GM12878 (cell line): ENCODE measurements at regions of chr19 and their contacts with region 1.

Region 1: DNA sequence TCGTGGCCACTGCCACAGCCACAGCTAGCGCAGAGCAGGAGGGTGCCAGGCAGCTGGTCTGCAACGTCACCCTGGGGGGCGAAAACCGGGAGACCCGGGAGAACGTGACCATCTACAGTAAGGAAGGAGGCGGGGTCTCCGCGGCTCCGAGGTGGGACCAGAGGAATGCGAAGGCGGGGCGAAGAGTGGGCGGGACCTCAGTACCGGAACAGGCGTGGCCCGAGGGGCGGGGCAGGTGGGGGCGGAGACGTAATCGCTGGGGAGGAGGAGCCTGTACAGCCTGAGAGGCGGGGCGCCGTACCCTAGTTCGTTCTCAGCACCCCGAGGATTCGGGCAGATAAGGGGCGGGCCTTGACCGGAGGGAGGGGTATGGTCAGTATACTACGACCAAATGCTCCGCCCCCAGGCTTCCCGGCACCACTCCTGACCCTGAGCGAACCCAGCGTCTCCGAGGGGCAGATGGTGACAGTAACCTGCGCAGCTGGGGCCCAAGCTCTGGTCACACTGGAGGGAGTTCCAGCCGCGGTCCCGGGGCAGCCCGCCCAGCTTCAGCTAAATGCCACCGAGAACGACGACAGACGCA is 2.5 kb downstream of the ICAM5 start:
- DNase-seq: no peak
- ATAC-seq: peak; percentile 65
- H3K4me3 ChIP-seq: peak overlapping the region; percentile 77
- H3K27ac ChIP-seq: no peak overlapping the region
- H3K4me1 ChIP-seq: peaks cover 53% of the 10 kb centered on the region
- H3K27me3 ChIP-seq: peaks cover 3 to 16% of the 10 kb centered on the region in 2 experiments
- CTCF ChIP-seq: no peak
- EP300 ChIP-seq: no peak
- POLR2A ChIP-seq: no peak
- RAD21 ChIP-seq: no peak

Region 2: DNA sequence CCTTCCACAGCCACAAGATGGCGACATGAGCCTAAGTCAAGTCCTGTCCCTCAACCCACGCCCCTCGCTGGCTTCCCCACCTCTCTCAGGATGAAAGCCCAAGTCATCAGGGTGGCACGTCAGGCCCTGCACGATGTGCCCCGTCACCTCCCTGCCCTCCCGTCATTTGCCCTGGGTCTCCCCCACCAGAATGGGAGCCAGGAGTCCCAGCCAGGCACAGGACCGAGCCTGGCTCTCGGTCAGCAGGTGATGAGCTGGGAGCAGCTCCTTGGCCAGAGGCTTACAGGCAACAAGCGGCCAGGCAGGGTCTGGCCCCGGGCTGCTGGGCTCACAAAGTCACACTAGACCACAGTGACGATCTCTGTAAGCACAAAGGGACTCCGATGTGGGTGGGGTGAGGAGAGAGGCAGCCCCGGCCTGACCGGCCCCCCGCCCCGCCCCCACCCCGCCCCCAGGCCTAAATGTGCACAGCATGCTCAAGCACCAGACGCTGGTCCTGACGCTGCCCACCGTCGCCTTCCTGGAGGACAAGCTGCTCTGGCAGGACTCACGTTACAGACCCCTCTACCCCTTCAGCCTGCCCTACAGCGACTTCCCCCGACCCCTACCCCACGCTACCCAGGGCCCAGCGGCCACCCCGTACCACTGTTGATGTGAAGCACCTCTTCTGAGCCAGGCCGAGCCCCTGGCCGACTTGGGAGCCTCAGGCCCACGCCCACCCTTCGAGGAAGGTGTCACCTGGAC is 33.0 kb before region 1 on chr19:
- CTCF ChIA-PET with region 1: interaction called, 25 read pairs
- POLR2A ChIA-PET with region 1: interaction called, 6 read pairs
- RAD21 ChIA-PET with region 1: interaction called, 20 read pairs
- SMC1A ChIA-PET with region 1: interaction called, 4 read pairs
- in situ Hi-C with region 1: no loop called
- intact Hi-C with region 1: no loop called
- DNase-seq: no peak
- ATAC-seq: peak; percentile 91
- H3K4me3 ChIP-seq: no peak overlapping the region
- H3K27ac ChIP-seq: 0 out of 2 replicates have a peak overlapping the region, but pooled peaks have one; percentile 27
- H3K4me1 ChIP-seq: peaks cover 11% of the 10 kb centered on the region
- H3K27me3 ChIP-seq: no peaks in the 10 kb centered on the region
- CTCF ChIP-seq: peak; percentile 71 to 75 (median 73)
- EP300 ChIP-seq: no peak
- POLR2A ChIP-seq: peak; percentile 72
- RAD21 ChIP-seq: peak; percentile 74

Region 3: GRCh38 chr19:10279737-10280442 is 12.4 kb before region 1 on chr19:
- CTCF ChIA-PET with region 1: interaction called, 11 read pairs
- POLR2A ChIA-PET with region 1: interaction called, 13 read pairs
- RAD21 ChIA-PET with region 1: interaction called, 7 read pairs
- SMC1A ChIA-PET with region 1: interaction called, 17 read pairs
- in situ Hi-C with region 1: no loop called
- intact Hi-C with region 1: no loop called
- DNase-seq: no peak
- ATAC-seq: peak; percentile 30
- H3K4me3 ChIP-seq: peak overlapping the region; percentile 47; the same call in 1 of the 2 replicates
- H3K27ac ChIP-seq: no peak overlapping the region
- H3K4me1 ChIP-seq: peaks cover 11% of the 10 kb centered on the region
- H3K27me3 ChIP-seq: no peaks in the 10 kb centered on the region
- CTCF ChIP-seq: no peak
- EP300 ChIP-seq: no peak
- POLR2A ChIP-seq: peak; percentile 32; the same call in 1 of the 2 replicates
- RAD21 ChIP-seq: no peak

Region 4: DNA sequence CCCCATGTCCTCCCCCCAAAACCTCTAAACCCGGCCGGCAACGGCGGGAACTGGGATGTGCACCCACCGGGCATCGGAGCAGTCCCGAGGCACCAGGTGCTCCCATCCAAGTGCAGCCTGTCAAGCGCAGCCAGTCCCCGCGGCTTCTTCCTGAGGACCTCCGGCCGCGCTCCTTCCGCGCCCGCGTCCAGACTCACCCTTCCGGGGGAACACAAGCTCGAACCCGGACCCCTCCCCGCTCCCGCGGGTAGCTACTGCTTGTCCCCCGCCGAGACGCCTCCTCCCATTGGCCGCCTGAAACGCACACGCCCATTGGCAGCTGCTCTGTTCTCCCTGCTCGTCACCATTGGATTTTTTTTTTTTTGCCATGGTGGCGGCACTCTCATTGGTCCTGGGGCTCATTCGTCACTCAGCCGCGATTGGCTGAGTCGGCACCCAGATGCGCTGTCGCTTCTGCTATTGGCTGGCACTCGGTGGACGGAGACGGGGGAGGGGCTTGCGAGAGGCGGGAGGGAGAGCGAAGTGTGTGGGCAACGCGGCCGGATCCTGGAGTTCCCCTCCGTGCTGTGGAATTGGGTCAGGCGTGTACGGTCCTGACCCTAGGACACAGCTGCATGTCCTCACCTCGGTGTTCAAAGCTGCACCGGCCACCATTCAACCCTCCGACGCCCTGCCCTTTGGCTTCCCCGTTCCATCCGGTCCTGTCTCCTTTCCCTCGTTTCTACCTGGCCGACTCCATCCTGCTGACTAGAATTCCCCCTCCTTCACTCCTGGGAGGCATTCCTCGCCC is 88.2 kb after region 1 on chr19 and contains the start of gene TYK2:
- CTCF ChIA-PET with region 1: interaction called, 5 read pairs
- POLR2A ChIA-PET with region 1: interaction called, 10 read pairs
- RAD21 ChIA-PET with region 1: interaction called, 10 read pairs
- SMC1A ChIA-PET with region 1: interaction called, 5 read pairs
- in situ Hi-C with region 1: no loop called
- intact Hi-C with region 1: no loop called
- DNase-seq: peak; percentile 99
- ATAC-seq: peak; percentile 97
- H3K4me3 ChIP-seq: peak within 1 kb of the TSS; percentile 95
- H3K27ac ChIP-seq: peak within 1 kb of the TSS; percentile 87
- H3K4me1 ChIP-seq: peaks cover 10% of the 10 kb centered on the region
- H3K27me3 ChIP-seq: no peaks in the 10 kb centered on the region
- CTCF ChIP-seq: no peak
- EP300 ChIP-seq: peak; percentile 6 to 55; a peak in 3 of 4 replicates
- POLR2A ChIP-seq: peak; percentile 92
- RAD21 ChIP-seq: no peak
- polyA plus RNA-seq, gene TYK2: 36.4 to 66.9 TPM

Region 5: DNA sequence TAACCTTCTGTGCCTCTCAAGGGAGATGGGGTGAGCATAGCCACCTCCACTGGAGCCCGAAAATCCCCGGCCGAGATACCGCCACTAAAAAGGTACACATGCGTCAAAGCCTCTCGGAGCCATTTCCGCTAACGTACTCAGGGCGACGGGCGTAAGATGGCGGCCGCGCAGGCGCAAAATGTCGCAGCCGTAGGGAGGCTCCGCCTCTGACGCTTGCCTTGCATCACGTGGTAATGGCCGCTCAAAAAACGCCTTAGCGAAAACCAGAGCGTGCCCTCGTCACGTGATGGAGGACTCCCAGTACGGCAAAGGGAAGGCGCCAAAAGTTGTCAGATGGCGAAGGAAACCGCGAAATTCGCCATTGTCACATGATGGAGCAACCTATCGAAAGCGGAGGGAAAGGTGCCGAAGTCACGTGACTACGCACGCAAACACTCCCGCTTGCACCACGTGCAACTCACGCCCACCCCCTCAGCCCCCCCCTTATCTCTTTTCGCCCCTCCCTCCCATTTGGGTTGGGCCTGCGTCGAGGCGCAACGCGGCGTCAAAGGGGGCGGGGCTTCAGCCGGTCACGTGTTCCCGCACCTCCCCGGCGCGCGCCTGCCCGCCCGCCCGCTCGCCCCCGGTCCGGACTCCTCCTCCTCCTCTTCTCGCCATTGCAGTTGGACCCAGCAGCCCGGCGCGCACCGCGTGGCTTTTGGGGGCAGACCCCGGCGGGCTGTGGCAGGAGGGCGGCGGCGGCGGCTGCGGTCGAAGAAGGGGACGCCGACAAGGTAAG is 361.6 kb after region 1 on chr19 and contains the start of gene ILF3:
- CTCF ChIA-PET with region 1: no interaction called
- POLR2A ChIA-PET with region 1: interaction called, 13 read pairs
- RAD21 ChIA-PET with region 1: no interaction called
- SMC1A ChIA-PET with region 1: no interaction called
- in situ Hi-C with region 1: no loop called
- intact Hi-C with region 1: no loop called
- DNase-seq: peak; percentile 100
- ATAC-seq: peak; percentile 83
- H3K4me3 ChIP-seq: peak within 1 kb of the TSS; percentile 91
- H3K27ac ChIP-seq: peak within 1 kb of the TSS; percentile 99
- H3K4me1 ChIP-seq: peaks cover 6% of the 10 kb centered on the region
- H3K27me3 ChIP-seq: no peaks in the 10 kb centered on the region
- CTCF ChIP-seq: no peak
- EP300 ChIP-seq: peak; percentile 52 to 54
- POLR2A ChIP-seq: peak; percentile 89
- RAD21 ChIP-seq: no peak
- polyA plus RNA-seq, gene ILF3: 28.1 to 38.1 TPM